Aorta (tissue), 5 donors: ENCODE measurements at regions of chr5 and their contacts with region 1.

Region 1: DNA sequence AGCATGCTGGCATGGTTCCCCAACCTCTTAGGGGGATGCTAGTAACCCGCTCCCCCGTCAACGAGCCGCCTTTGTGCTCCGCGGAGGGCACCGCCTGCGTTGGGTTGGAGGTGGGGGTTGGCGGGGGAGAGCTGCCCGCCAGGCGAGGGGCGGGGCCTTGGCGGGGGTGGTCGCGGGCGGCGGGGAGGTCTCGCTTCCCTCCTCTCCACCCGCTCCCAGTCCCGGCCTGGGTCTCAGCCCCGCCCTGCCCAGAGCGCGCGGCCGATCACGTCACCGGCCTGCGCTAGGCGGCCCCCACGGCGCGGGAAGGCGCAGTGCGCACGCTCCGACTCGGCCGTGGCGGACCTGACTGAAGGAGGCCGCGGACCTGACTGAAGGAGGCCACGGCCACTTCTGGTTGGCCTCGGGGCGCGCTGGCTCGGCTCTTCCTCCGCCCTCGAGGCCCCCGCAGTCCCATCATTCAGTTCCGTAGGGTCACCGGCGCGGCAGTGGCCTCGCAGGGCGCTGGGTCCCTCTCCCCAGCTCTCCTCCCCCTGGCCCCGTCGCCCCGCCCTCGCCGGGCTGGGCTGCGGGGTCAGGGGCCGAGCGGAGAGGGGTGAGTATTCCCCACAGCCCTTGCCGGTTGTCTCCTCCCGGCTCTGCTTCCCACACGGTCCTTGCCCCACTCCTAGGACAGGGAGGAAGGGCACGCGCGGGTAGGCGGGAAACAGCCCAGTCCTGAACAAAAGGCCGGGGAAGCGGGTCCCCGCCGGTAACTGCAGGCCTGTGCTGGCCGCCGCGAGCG is at the start of gene ATG10:
- DNase-seq: peak; percentile 95 to 97
- ATAC-seq: peak; percentile 100
- H3K4me3 ChIP-seq: peak within 1 kb of the TSS; percentile 96 to 97
- H3K27ac ChIP-seq: peak within 1 kb of the TSS; percentile 65 to 95
- H3K4me1 ChIP-seq: no peaks in the 10 kb centered on the region
- H3K27me3 ChIP-seq: no peaks in the 10 kb centered on the region
- total RNA-seq, gene ATG10: 7.1 to 10.3 TPM

Region 2: DNA sequence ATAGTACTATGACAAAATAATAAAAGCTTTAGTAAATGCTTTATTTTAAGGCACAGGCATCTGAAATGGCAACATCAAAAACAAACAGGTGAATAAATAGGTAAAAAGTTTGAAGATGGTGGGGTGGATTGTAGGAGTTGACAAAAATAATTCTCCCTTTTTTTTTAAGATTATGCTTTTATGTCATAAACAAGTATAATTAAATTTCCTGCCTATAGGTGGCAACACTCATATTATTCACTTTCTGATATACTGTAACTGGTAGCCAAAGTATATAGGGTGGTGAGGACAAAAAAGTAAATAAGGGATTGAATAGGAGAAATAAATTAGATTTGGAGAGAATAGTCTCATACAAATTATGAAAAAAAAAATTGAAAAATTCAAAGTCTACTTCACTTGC is 457.9 kb before region 1 on chr5:
- intact Hi-C with region 1: loop called in 1 of 2 experiments (anchors 10 kb)
- DNase-seq: no peak
- ATAC-seq: no peak
- H3K4me3 ChIP-seq: no peak overlapping the region
- H3K27ac ChIP-seq: no peak overlapping the region
- H3K4me1 ChIP-seq: no peaks in the 10 kb centered on the region
- H3K27me3 ChIP-seq: no peaks in the 10 kb centered on the region

Region 3: DNA sequence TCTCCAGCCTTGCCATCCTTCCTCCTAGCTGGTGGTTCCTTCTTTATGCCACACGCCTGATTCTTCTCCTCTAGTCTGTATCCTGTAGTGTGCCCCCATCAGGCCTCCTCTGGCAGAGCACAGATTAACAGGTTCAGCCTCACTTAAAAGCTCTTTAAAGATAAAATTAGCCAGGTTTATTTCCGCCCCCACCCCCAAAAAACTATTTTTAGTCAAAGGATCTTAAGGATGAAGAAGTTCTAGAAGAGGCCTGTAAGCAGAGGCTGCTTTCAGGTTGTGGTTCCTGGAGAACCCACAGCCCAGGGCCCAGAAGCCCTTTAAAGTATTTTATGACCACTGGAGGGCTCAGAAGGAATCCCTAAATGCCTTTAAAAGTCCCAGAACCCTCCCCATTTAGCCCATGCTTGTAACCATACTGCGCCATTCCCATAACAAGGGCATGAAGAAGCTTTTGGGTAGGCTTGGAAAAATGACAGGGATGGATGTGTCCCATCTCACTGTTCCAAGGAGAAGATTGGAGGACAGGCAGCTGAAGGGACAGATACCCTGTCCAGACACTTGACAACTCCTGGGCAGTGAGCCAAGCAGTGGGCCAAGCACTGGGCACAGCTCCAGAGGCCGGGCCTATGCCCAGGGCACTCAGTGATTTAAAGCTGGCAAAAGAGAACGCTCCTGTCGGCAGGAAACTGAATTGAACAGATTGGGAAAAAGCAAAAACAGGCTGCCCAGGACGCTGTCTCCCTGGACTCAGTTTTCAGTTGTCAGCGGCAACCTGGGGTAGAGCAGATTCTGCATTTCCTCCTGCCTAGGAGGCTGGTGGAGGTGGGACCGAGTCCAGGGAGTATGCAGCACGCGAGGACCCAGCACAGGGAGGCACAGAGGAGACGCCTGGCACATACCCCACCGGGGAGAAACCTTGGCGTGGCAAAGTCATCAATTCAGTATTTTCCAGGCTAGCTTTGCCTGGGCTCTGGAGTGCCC is 114.7 kb before region 1 on chr5:
- intact Hi-C with region 1: loop called (anchors 2 to 5 kb)
- DNase-seq: peak; percentile 77 to 81
- ATAC-seq: peak; percentile 53
- H3K4me3 ChIP-seq: no peak overlapping the region
- H3K27ac ChIP-seq: peak overlapping the region; percentile 65 to 98
- H3K4me1 ChIP-seq: no peaks in the 10 kb centered on the region
- H3K27me3 ChIP-seq: no peaks in the 10 kb centered on the region

Region 4: DNA sequence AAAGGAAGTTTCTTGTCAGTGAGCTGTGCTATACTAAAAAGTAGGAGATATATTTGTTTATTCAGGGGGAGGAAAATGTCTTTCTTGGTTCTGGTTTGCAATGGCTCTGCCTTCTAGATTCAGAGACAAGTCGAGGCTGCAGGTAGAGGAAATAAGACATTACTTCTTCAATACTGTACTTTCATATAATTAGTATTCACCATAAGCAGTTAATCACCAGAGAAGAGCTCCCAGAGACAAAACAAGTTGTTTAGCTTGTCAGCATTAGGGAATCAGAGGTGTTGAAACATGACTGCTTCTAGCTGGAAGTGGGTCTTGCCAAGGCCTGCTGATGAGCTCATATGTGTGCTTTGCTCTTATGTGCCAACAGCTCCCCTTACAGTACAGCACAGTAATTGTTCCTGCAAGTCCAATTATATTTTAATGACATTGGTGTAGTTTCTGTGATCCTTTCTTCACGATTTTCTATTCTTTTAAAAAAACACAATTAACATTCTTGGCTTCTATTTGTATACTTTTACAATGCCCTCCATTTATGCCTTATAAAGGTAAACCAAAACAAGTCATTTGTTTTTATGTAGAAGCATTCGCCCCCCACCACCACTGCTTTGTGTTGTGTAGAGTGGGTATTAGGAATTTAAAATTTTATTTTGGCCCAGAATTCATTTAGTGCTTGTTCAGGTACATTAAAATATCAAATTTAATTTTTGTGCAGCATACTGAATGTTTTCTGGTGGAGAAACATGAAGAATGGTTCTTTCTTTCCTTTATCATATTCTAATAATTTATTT is 194.0 kb after region 1 on chr5:
- intact Hi-C with region 1: loop called in 1 of 2 experiments (anchors 10 kb)
- DNase-seq: peak; percentile 74 to 77
- ATAC-seq: peak; percentile 97
- H3K4me3 ChIP-seq: no peak overlapping the region
- H3K27ac ChIP-seq: no peak overlapping the region
- H3K4me1 ChIP-seq: no peaks in the 10 kb centered on the region
- H3K27me3 ChIP-seq: no peaks in the 10 kb centered on the region